ENCODE measurements at regions of chrX and their contacts with region 1.

Region 1: GRCh38 chrX:150772150-150772970 is 79.2 kb downstream of the MTMR1 start:
- DNase-seq: peak; percentile 51 to 81 (median 67)
- ATAC-seq: peak; percentile 65
- H3K4me3 ChIP-seq: no peak overlapping the region
- H3K4me3 Mint-ChIP-seq: no peak overlapping the region
- H3K27ac ChIP-seq: no peak overlapping the region
- H3K27ac Mint-ChIP-seq: no peak overlapping the region
- H3K4me1 ChIP-seq: peaks cover 9% of the 10 kb centered on the region
- H3K4me1 Mint-ChIP-seq: no peaks in the 10 kb centered on the region
- H3K27me3 ChIP-seq: no peaks in the 10 kb centered on the region
- H3K27me3 Mint-ChIP-seq: no peaks in the 10 kb centered on the region
- CTCF ChIP-seq: peak; percentile 64

Region 2: DNA sequence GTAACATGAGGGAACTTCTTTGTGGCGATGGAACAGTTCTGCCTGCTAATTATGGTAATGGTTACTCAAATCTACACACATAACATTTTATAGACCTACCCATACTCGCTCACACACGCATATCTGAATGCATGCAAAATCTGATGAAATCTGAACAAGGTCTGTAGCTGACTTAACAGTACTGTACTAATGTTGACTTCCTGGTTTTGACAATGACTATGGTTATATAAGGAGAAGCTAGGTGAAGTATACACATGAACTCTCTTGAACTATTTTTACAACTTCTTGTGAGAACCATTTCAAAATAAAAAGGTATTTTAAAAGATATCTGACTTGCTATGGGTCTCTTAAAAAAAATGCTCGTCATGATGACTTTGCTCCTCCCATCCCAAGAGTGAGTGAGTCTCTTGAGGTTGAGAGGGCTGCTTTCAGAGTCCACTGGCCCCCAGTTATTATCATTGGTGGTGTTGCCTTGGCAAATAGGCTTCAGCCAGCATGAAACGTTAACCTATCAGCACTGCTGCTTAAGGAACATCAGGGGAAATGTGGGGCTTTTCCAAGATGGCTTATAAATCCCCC is 20.7 kb after region 1 on chrX:
- CTCF ChIA-PET with region 1: no interaction called
- POLR2A ChIA-PET with region 1: no interaction called
- intact Hi-C with region 1: no loop called
- DNase-seq: no peak
- ATAC-seq: no peak
- H3K4me3 ChIP-seq: no peak overlapping the region
- H3K4me3 Mint-ChIP-seq: no peak overlapping the region
- H3K27ac ChIP-seq: no peak overlapping the region
- H3K27ac Mint-ChIP-seq: no peak overlapping the region
- H3K4me1 ChIP-seq: no peaks in the 10 kb centered on the region
- H3K4me1 Mint-ChIP-seq: no peaks in the 10 kb centered on the region
- H3K27me3 ChIP-seq: no peaks in the 10 kb centered on the region
- H3K27me3 Mint-ChIP-seq: no peaks in the 10 kb centered on the region
- CTCF ChIP-seq: no peak

Region 3: DNA sequence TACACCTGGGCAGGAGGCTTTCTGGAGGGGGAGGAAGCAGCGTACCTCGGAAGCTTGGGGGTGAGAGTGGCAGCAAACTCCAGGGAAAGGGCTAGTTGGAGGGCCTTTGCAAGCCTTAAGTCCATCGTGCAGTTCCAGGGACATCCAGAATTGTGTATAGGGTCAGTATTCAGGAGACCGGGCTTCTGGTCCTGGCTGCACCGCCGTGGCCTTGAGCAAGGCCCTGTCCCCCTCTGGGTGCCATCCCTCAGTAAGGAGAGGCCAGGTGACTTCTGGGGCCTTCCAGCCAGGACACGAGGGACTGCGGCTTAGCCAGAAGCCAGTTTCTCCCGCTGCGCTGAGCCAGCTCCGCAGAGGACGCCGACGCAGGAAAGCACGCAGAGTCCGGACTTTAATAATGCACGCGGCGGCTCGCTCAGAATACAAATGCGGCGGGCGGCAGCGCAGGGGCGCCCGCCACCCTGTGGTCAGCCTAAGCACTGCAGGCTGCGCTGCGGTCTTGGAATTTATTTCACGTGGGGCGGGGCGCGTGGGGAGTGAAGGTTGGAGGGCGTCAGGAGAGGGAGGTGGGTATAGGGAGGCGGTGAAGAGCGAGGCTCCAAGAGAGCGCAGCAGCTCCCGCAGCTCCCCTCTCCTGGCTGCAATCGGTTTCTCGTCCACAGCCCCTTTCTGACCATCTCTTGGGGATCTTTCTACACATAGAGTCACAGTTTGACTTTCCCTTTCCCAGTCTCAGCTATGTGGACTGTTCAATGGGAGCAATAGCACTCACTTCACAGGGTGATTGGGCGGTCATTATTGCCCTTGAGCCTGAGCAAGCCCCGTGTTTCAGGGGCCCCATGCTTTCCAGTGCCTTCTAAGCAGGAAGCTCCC is 310.0 kb after region 1 on chrX:
- CTCF ChIA-PET with region 1: interaction called, 36 read pairs
- POLR2A ChIA-PET with region 1: no interaction called
- intact Hi-C with region 1: loop called (anchors 1 kb)
- DNase-seq: peak; percentile 24 to 67 (median 42)
- ATAC-seq: peak; percentile 80
- H3K4me3 ChIP-seq: no peak overlapping the region
- H3K4me3 Mint-ChIP-seq: no peak overlapping the region
- H3K27ac ChIP-seq: no peak overlapping the region
- H3K27ac Mint-ChIP-seq: no peak overlapping the region
- H3K4me1 ChIP-seq: peaks cover 11% of the 10 kb centered on the region
- H3K4me1 Mint-ChIP-seq: peaks cover 4% of the 10 kb centered on the region
- H3K27me3 ChIP-seq: peaks cover 5 to 27% of the 10 kb centered on the region in 2 experiments
- H3K27me3 Mint-ChIP-seq: peaks cover 24% of the 10 kb centered on the region
- CTCF ChIP-seq: peak; percentile 72

Region 4: DNA sequence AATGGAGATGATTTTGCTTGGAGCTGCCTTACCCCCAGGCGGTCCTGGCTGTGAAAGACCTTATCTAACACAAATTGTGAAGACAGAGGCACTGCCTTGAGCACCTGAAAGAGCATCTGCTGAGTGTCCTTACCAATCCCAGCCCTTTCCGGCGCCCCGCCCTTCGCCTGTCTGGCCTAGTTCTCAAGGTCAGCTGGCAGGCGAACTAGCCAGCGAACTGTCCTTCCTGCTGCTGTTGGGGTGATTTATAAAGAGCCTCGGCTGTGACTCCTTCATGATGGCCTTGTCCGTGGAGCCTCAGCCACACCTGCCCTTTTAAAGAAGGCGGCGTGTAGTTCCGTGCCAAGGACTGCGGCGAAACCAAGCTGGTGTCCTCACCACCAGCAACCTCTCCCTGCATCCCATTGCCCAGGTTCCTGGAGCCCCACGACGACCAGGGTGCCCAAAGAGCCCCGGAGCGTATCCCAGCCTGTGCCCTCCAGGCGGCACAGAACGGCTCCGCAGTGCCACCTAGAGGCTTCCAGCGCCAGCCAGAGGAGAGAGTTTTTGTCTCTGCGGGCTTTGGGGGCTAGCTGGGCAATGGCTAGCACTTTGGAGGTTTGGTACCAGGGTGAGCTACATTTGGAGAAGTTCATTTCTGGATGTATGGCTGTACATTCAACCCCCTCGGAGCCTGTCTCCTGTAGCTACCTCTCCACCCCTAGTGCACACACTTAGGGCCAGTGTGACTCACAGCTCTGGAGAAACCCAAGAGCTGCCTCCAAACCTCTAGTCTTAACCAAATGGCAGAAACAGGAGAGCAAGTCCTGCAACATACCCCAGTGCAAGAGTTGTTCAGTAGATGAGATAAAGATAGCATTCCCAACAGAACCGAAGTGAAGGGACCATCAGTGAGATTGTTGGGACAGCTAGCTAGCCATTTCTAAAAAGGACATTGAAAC is 587.8 kb after region 1 on chrX:
- CTCF ChIA-PET with region 1: no interaction called
- POLR2A ChIA-PET with region 1: no interaction called
- intact Hi-C with region 1: loop called in 1 of 2 experiments (anchors 5 kb)
- DNase-seq: peak; percentile 12 to 55 (median 26)
- ATAC-seq: peak; percentile 57
- H3K4me3 ChIP-seq: peak overlapping the region; percentile 19
- H3K4me3 Mint-ChIP-seq: peak overlapping the region; percentile 42
- H3K27ac ChIP-seq: no peak overlapping the region
- H3K27ac Mint-ChIP-seq: no peak overlapping the region
- H3K4me1 ChIP-seq: peaks cover 7% of the 10 kb centered on the region
- H3K4me1 Mint-ChIP-seq: no peaks in the 10 kb centered on the region
- H3K27me3 ChIP-seq: peaks cover 0 to 10% of the 10 kb centered on the region in 2 experiments
- H3K27me3 Mint-ChIP-seq: peaks cover 12% of the 10 kb centered on the region
- CTCF ChIP-seq: peak; percentile 59

Region 5: DNA sequence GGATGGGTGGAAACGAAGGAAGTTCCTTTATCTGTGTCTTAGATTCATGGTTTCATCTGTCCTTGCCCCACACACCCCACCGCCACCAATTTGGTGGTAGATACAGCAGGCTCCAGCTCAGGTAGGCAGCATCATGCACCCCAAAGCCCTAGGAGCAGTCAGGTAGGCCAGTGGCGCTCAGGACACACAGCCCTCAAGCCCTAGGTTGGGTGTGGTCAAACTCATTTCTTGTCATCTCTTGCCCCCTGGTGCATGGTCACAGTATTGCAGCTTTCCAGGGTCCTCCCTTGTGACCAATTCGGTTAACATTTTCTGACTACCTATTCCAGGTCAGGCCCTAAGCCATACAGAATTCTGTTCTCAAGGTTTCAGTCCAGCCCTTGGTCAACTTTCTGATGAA is 908.4 kb after region 1 on chrX:
- CTCF ChIA-PET with region 1: no interaction called
- POLR2A ChIA-PET with region 1: no interaction called
- intact Hi-C with region 1: loop called in 1 of 2 experiments (anchors 5 kb)
- DNase-seq: peak in 13 of 14 experiments; percentile 7 to 61 (median 35)
- ATAC-seq: no peak
- H3K4me3 ChIP-seq: no peak overlapping the region
- H3K4me3 Mint-ChIP-seq: no peak overlapping the region
- H3K27ac ChIP-seq: no peak overlapping the region
- H3K27ac Mint-ChIP-seq: no peak overlapping the region
- H3K4me1 ChIP-seq: no peaks in the 10 kb centered on the region
- H3K4me1 Mint-ChIP-seq: no peaks in the 10 kb centered on the region
- H3K27me3 ChIP-seq: no peaks in the 10 kb centered on the region
- H3K27me3 Mint-ChIP-seq: peaks cover 9% of the 10 kb centered on the region
- CTCF ChIP-seq: peak; percentile 48